GM12878 (cell line): ENCODE measurements at regions of chr14 and their contacts with region 1.

Region 1: DNA sequence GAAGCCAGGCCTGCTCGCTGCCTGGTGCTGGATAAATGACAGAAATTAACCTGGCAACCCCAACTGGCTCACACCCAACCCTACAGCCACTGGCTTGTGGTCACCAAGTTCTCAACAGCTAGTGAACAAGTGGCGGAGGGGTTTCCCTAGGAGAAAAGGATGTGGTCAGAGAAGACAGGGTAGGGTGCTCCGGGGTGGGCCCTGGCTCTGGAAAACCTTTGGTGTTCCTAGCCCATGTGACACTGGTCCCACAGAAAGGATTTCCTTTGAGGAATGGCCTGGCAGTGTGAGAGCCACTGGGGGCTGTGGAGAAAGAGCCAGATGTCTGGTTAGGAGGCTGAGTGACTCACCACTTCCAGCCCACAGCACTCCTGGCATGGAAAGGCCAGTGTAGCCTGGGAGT is 8.7 kb downstream of the SYNE3 start:
- DNase-seq: no peak
- ATAC-seq: peak; percentile 54
- H3K4me3 ChIP-seq: no peak overlapping the region; the same call in 1 of the 2 replicates
- H3K27ac ChIP-seq: peak overlapping the region; percentile 50
- H3K4me1 ChIP-seq: peaks cover 48% of the 10 kb centered on the region
- H3K27me3 ChIP-seq: no peaks in the 10 kb centered on the region
- CTCF ChIP-seq: no peak
- EP300 ChIP-seq: no peak
- POLR2A ChIP-seq: no peak
- RAD21 ChIP-seq: no peak

Region 2: GRCh38 chr14:95157327-95158189 is 350.1 kb before region 1 on chr14 and contains the start of gene DICER1:
- CTCF ChIA-PET with region 1: no interaction called
- POLR2A ChIA-PET with region 1: no interaction called
- RAD21 ChIA-PET with region 1: no interaction called
- SMC1A ChIA-PET with region 1: no interaction called
- in situ Hi-C with region 1: no loop called
- intact Hi-C with region 1: loop called (anchors 10 kb)
- DNase-seq: peak; percentile 44
- ATAC-seq: peak; percentile 85
- H3K4me3 ChIP-seq: peak within 1 kb of the TSS; percentile 89
- H3K27ac ChIP-seq: peak within 1 kb of the TSS; percentile 95
- H3K4me1 ChIP-seq: peaks cover 8% of the 10 kb centered on the region; the same call in 1 of the 2 replicates
- H3K27me3 ChIP-seq: no peaks in the 10 kb centered on the region
- CTCF ChIP-seq: no peak
- EP300 ChIP-seq: no peak
- POLR2A ChIP-seq: peak; percentile 60
- RAD21 ChIP-seq: no peak
- polyA plus RNA-seq, gene DICER1: 6.8 to 9.8 TPM

Region 3: DNA sequence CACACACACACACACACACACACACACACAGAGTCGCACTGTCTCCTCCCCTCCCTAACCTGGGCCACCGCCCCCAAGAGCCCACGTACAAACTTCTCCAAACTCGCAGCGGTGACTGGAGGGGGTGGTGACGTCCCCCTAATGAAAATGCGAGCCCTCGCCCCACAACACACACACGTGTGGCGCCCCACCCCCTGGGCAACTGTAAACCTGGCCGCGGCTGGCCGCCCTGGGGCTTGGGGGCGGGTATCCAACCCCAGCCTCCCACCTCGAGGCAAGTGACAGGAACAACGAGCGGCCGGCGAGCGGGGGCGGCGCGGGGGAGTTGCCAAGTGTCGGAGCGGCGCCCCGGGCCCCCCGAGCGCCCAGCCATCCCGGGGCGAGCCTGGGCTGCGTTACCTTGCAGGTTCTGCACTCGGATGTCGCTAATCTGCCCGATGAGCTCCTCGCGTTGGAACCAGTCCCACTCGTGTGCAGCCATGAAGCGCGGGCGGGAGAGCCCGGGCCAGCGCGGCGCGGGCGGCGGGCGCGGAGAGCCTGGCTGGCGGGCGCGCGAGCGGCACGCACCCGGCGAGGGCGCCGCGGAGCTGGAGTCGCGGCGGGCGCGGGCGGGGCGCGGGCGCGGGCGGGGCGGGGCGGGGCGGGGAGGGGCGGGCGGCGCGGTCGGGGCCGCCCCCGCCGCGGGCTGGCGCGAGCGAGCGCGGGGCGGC is 188.2 kb before region 1 on chr14 and contains the start of gene CLMN:
- CTCF ChIA-PET with region 1: no interaction called
- POLR2A ChIA-PET with region 1: no interaction called
- RAD21 ChIA-PET with region 1: no interaction called
- SMC1A ChIA-PET with region 1: no interaction called
- in situ Hi-C with region 1: no loop called
- intact Hi-C with region 1: loop called (anchors 10 kb)
- DNase-seq: no peak
- ATAC-seq: peak; percentile 54
- H3K4me3 ChIP-seq: peak within 1 kb of the TSS; percentile 94
- H3K27ac ChIP-seq: 0 out of 2 replicates have a peak within 1 kb of the TSS, but pooled peaks have one; percentile 16
- H3K4me1 ChIP-seq: peaks cover 18% of the 10 kb centered on the region
- H3K27me3 ChIP-seq: no peaks in the 10 kb centered on the region
- CTCF ChIP-seq: no peak
- EP300 ChIP-seq: no peak
- POLR2A ChIP-seq: peak; percentile 56; the same call in 1 of the 2 replicates
- RAD21 ChIP-seq: 0 out of 2 replicates have a peak, but pooled peaks have one; percentile 1
- polyA plus RNA-seq, gene CLMN: 7.8 to 13.1 TPM

Region 4: GRCh38 chr14:95483309-95484165 is 24.2 kb before region 1 on chr14:
- CTCF ChIA-PET with region 1: interaction called, 3 read pairs
- POLR2A ChIA-PET with region 1: interaction called, 9 read pairs
- RAD21 ChIA-PET with region 1: interaction called, 4 read pairs
- SMC1A ChIA-PET with region 1: interaction called, 12 read pairs
- in situ Hi-C with region 1: no loop called
- intact Hi-C with region 1: no loop called
- DNase-seq: no peak
- ATAC-seq: no peak
- H3K4me3 ChIP-seq: no peak overlapping the region
- H3K27ac ChIP-seq: no peak overlapping the region
- H3K4me1 ChIP-seq: peaks cover 24% of the 10 kb centered on the region
- H3K27me3 ChIP-seq: no peaks in the 10 kb centered on the region
- CTCF ChIP-seq: no peak
- EP300 ChIP-seq: no peak
- POLR2A ChIP-seq: no peak
- RAD21 ChIP-seq: no peak

Region 5: DNA sequence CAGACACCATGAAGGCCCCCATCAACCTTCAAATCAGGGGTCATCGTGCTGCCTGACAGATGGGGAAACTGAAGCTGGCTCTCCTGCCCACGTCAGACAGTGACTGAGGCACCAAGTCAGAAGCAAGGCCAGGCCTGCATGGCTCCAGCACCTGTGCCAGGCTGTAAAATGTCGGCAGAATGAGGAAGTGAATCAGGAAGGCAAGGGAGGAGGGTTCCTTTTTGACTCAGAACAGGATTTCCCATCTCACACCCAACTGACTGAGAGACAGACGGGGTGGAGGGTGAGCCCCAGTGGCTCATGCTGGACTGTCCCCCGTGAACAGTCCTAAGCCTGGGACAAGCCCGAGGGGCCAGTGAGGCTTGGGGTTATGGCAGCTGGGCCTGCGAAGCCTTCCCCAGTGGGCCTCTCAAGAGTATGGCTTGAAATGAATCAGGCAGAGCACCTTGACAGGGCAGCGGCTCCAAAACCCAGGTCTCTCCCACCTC is 12.1 kb before region 1 on chr14:
- CTCF ChIA-PET with region 1: interaction called, 55 read pairs
- POLR2A ChIA-PET with region 1: interaction called, 276 read pairs
- RAD21 ChIA-PET with region 1: interaction called, 49 read pairs
- SMC1A ChIA-PET with region 1: interaction called, 64 read pairs
- in situ Hi-C with region 1: no loop called
- intact Hi-C with region 1: no loop called
- DNase-seq: peak; percentile 94
- ATAC-seq: peak; percentile 90
- H3K4me3 ChIP-seq: peak overlapping the region; percentile 37; the same call in 1 of the 2 replicates
- H3K27ac ChIP-seq: peak overlapping the region; percentile 98
- H3K4me1 ChIP-seq: peaks cover 60% of the 10 kb centered on the region
- H3K27me3 ChIP-seq: no peaks in the 10 kb centered on the region
- CTCF ChIP-seq: no peak
- EP300 ChIP-seq: peak; percentile 66 to 95
- POLR2A ChIP-seq: peak; percentile 66
- RAD21 ChIP-seq: peak; percentile 17; the same call in 1 of the 2 replicates